Cardiac septum (tissue), 1 donor: ENCODE measurements at regions of chr15 and their contacts with region 1.

Region 1: DNA sequence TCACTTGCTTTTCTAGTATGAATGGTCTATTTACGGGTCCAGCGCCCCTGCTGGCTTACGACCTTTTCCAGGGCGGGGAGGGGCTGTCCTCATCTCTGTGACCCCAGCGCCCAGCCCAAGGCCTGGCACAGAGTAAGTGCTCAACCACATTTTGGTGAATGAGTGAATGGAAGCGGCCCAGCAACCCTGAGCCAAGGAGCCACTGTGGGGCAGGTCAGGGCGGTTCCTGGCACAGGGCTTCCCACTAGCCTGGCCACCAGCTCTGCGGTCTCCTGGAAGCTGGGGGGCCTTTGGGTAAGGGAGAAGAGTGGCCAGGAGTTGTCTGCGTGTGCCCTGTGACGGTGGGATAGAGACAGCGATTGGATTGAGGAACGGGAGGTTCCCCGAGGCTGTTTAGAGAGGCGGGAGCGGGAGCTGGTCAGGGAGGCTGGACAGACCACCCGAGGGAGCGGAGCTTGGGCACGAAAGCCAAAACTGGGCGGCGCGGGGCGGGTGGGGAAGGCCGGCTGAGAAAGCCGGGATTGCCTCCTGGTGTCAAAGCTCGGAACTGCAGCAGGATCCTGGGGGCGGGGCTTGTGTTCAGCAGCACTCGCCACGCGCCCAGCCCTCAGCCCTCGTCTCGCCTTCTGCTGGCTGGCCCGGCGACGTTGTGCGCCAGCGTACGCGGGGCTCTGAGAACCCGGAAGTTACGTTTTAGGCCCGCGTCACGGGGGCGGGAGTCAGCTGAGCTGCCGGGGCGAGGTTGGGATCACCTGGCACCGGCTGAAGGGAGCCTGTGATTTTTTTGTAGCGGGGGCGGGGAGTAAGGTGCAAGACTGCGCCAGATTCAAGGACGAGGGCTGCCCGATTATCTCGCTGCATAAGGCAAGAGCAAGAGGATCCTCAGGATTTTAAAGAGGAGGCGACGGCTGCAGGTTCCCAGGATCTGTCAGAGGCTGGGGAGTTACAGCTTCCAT is at the start of gene VPS18:
- DNase-seq: peak; percentile 100
- total RNA-seq, gene VPS18: 16.0 TPM

Region 2: DNA sequence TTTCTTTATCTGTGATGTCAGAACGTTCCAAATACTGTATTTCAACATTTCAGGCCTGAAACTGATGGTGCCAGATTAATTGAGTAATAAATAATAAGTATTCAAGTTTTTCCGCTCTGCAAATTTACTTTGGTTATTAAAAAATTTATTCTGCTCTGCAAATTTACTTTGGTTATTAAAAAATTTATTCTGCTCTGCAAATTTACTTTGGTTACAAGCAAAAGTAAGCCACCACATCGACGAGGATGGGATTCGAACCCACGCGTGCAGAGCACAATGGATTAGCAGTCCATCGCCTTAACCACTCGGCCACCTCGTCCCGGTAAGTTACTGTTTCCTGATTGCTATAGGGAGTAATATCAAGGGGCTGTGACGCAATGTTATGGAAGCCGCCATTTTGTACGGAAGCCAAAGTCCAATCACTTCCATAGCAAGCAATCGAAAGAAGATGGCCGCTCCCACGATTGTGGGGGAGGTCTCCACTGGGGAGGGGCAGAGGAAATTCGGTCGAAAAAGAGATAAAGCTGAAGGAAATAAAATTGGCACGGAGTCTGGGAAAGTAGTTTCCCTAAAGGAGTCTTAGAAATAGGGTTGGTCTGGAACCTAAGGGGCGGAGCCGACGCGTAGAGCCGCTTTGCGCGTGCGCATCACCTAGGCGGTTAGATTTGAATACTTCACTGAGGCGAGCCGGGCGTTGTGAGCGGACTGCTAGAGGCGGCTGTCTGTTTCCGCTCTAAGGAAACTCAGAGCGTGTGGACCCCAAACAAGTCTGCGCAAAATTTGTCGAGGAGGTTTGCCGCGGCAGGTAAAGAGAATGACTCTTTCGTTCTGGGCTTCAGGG is 300.2 kb before region 1 on chr15 and contains the start of gene KNL1:
- intact Hi-C with region 1: loop called (anchors 5 kb)
- DNase-seq: peak; percentile 96
- total RNA-seq, gene KNL1: 0.43 TPM

Region 3: DNA sequence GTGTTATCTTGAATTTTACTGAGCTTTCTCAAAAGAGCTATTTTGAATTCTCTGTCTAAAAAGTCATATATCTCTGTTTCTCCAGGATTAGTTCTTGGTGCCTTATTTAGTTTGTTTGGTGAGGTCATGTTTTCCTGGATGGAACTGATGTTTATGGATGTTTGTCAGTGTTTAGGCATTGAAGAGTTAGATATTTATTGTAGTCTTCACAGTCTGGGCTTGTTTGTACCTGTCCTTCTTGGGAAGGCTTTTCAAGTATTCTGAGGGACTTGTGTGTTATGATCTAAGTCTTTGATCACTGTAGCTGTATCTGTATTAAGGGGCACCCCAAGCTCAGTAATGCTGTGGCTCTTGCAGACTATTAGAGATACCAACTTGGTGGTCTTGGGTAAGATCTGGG is 209.6 kb before region 1 on chr15:
- intact Hi-C with region 1: loop called (anchors 2 kb)
- DNase-seq: no peak

Region 4: DNA sequence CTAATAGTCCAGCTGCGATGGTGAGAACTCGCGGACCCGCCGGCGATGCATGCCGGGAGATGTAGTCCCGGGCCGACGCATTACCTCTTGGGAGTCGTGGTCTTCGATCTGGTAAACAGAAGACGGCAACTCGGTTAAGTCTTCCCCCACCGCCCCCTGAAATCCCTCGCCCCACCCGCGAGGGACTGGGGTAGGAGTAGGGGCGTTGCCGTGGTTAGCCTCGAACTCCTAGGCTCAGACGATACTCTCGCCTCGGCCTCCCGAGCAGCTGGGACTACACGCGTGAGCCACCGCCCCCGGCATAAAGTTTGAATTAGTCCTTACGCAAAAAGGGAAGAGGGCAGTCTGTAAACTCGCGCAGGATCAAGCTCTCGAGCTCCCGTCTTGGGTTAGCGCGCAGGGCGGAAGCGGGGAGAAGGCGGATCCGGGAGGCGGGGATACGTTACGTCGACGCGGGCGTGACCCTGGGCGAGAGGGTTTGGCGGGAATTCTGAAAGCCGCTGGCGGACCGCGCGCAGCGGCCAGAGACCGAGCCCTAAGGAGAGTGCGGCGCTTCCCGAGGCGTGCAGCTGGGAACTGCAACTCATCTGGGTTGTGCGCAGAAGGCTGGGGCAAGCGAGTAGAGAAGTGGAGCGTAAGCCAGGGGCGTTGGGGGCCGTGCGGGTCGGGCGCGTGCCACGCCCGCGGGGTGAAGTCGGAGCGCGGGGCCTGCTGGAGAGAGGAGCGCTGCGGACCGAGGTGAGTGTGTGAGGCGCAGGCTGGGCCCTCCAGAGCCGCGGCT is 199.1 kb before region 1 on chr15 and contains the start of gene RAD51:
- intact Hi-C with region 1: loop called (anchors 5 kb)
- DNase-seq: peak; percentile 98
- total RNA-seq, gene RAD51: 0.51 TPM

Region 5: GRCh38 chr15:40754883-40755811 is 138.9 kb before region 1 on chr15 and contains the start of gene RMDN3:
- intact Hi-C with region 1: loop called (anchors 10 kb)
- DNase-seq: peak; percentile 96
- total RNA-seq, gene RMDN3: 21.1 TPM

Region 6: GRCh38 chr15:40807028-40807887 is 86.8 kb before region 1 on chr15 and contains the starts of genes DNAJC17 and ZFYVE19:
- intact Hi-C with region 1: loop called (anchors 1 kb)
- DNase-seq: peak; percentile 99
- total RNA-seq, gene DNAJC17: 19.1 TPM
- total RNA-seq, gene ZFYVE19: 11.0 TPM

Region 7: GRCh38 chr15:40857601-40858341 is 36.2 kb before region 1 on chr15:
- intact Hi-C with region 1: loop called (anchors 1 kb)
- DNase-seq: peak; percentile 90